ENCODE measurements at regions of chr19 and their contacts with region 1.

Region 1: GRCh38 chr19:1624458-1624857 is 19.2 kb upstream of the UQCR11 start:
- DNase-seq: peak in 7 of 10 donors; percentile 16 to 89 (median 54)

Region 2: GRCh38 chr19:1767464-1767933 is 143.0 kb after region 1 on chr19:
- intact Hi-C with region 1: loop called (anchors 10 kb)
- DNase-seq: peak in 4 of 10 donors; percentile 36 to 45 (median 41)

Measured in posterior cingulate gyrus (tissue), 11 donors.